Calu3 (cell line): ENCODE measurements at regions of chr22 and their contacts with region 1.

Region 1: GRCh38 chr22:41091132-41092022 is 1.0 kb upstream of the EP300 start:
- DNase-seq: peak; percentile 99
- H3K4me3 Mint-ChIP-seq: peak overlapping the region; percentile 79
- H3K27ac Mint-ChIP-seq: peak overlapping the region; percentile 100
- H3K4me1 Mint-ChIP-seq: no peaks in the 10 kb centered on the region
- H3K27me3 Mint-ChIP-seq: no peaks in the 10 kb centered on the region
- CTCF ChIP-seq: no peak

Region 2: DNA sequence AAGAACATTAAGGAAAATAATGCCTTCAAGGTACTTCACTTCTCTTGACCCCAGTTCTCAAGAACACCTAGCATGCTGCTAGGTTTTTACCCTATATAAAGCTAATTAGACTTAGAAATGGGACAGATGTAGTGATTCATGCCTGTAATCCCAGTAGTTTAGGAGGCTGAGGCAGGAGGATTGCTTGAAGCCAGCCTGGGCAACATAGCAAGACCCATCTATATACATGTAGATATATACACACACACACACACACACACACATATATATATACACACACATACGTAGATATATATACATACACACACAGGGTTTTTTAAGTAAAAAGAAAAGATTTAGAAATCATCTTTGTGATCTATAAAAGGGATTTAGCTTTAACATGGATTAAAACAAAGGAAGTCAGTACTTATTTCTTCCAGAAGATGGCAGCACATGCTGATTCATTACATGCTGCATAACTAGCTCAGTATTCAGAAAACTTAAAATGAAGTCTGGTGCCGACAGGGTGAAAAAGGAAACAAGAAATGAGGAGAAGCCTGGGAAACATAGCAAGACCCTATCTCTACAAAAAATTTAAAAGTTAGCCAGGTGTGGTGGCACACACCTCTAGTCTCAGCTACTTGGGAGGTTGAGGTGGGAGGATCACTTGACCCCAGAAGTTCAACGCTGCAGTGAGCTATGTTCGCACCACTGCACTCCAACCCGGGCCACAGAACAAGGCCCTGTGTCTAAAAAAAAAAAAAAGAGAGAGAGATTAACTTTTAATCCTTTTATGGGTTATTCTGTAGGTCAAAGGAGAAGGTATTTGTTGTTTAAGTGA is 168.7 kb before region 1 on chr22:
- CTCF ChIA-PET with region 1: interaction called, 8 read pairs
- intact Hi-C with region 1: loop called (anchors 2 kb)
- DNase-seq: peak; percentile 28
- H3K4me3 Mint-ChIP-seq: no peak overlapping the region
- H3K27ac Mint-ChIP-seq: no peak overlapping the region
- H3K4me1 Mint-ChIP-seq: no peaks in the 10 kb centered on the region
- H3K27me3 Mint-ChIP-seq: no peaks in the 10 kb centered on the region
- CTCF ChIP-seq: peak; percentile 64

Region 3: DNA sequence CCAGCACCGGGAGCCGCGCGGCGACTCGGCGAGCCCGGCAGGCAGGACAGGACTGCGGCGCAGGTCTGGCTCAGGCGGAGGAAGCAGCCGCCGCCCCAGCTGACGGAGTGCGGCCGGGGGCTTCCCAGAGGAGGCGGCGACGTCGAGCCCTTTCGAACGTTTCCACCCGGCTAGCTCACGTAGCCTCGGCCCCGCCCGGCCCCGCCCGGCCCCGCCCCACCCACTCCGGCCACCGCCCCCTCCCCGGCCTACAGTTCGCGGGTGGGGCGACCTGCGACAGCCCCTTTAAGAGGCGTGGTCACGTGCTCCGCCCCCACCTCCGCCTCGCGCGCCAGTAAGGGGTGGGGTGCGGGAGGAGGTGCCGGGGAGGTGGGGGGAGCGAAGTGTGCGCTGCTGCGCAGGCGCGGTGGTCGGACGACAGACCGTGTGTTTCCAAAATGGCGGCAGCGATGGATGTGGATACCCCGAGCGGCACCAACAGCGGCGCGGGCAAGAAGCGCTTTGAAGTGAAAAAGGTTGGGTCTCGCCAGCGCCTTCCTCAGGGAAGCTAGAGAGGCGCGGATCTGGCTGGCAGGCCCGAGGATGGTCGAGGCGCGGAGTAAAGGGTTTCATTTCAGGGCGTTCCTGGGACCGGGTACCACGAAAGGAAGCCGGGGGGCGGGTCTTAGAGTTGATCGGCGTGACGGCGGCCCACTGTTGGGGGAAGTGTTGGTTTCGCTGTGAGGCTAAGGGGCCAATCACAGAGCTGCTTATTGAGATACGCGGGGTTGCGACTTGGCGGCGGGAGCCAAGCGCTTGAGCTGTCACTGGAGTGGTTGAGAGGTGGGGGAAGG is 140.2 kb before region 1 on chr22 and contains the start of gene RBX1:
- CTCF ChIA-PET with region 1: interaction called, 4 read pairs
- intact Hi-C with region 1: loop called (anchors 5 kb)
- DNase-seq: peak; percentile 98
- H3K4me3 Mint-ChIP-seq: peak within 1 kb of the TSS; percentile 98
- H3K27ac Mint-ChIP-seq: peak within 1 kb of the TSS; percentile 95
- H3K4me1 Mint-ChIP-seq: peaks cover 30% of the 10 kb centered on the region
- H3K27me3 Mint-ChIP-seq: no peaks in the 10 kb centered on the region
- CTCF ChIP-seq: no peak
- total RNA-seq, gene RBX1: 45.5 and 51.8 TPM in 2 replicates

Region 4: DNA sequence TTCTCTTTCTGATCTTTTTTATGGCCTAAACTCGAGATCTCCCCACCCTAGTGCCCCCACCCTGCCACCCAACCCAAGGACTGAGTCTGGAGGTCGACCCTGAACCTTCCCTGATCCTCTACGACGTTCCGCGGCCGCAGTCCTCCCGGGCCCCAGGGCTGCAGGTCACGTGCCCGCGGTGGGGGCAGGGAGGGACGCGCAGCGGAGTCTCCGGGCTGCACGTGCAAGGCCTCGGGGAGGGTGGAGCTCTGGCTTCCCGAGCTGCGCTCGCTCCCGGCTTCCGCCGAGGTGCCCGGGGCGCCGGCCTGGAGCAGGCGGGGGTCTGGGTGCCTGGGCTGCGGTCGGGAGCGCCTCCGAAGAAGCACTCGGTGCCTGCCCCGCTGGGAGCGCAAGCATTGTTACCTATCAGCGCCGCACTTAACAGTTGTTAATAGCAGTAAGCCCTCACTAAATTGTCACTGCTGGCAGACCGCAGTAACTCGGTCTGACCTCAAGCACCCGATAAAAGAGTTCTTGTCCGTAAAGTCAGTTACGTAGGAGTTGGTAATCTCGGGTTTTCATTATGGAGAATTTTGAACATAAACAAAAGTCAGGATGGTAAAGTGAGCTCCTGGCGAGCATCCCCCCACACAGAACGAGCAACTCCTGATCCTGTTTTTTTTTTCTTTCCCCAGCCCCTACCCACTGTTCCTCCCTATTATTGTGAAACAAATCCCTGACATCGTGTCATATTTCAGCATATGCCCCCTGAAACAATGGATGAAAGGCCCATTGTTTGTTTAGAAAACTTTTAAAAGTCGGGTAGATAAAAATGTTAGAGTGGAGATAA is 68.7 kb before region 1 on chr22:
- CTCF ChIA-PET with region 1: no interaction called
- intact Hi-C with region 1: loop called (anchors 5 kb)
- DNase-seq: peak; percentile 94
- H3K4me3 Mint-ChIP-seq: peak overlapping the region; percentile 94
- H3K27ac Mint-ChIP-seq: peak overlapping the region; percentile 95
- H3K4me1 Mint-ChIP-seq: peaks cover 19% of the 10 kb centered on the region
- H3K27me3 Mint-ChIP-seq: no peaks in the 10 kb centered on the region
- CTCF ChIP-seq: no peak

Region 5: DNA sequence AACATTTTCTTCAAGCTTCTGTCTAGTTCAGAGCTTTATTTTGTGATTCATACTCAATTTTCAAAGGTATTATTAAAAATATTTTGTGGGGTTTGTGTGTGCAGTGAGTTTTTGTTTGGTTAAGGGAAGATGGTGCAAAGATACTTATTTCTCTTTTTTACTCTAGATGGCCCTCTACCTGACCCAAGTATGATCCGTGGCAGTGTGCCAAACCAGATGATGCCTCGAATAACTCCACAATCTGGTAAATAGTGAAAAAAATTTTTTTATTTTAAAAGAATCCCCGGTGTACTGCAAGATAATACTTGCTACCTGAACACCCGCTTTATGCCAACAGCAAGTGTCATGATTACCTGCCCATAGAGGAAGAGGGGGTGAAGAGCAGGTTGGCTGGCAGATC is 55.2 kb after region 1 on chr22:
- CTCF ChIA-PET with region 1: no interaction called
- intact Hi-C with region 1: no loop called
- DNase-seq: no peak
- H3K4me3 Mint-ChIP-seq: no peak overlapping the region
- H3K27ac Mint-ChIP-seq: no peak overlapping the region
- H3K4me1 Mint-ChIP-seq: no peaks in the 10 kb centered on the region
- H3K27me3 Mint-ChIP-seq: no peaks in the 10 kb centered on the region
- CTCF ChIP-seq: no peak

Region 6: GRCh38 chr22:41403532-41404318 is 312.3 kb after region 1 on chr22:
- CTCF ChIA-PET with region 1: no interaction called
- intact Hi-C with region 1: no loop called
- DNase-seq: peak; percentile 95
- H3K4me3 Mint-ChIP-seq: peak overlapping the region; percentile 2
- H3K27ac Mint-ChIP-seq: no peak overlapping the region
- H3K4me1 Mint-ChIP-seq: peaks cover 21% of the 10 kb centered on the region
- H3K27me3 Mint-ChIP-seq: no peaks in the 10 kb centered on the region
- CTCF ChIP-seq: peak; percentile 94